ENCODE measurements at regions of chr1 and their contacts with region 1.

Region 1: GRCh38 chr1:58883037-58883887 is 99.4 kb upstream of the JUN start:
- DNase-seq: peak; percentile 83 to 87
- ATAC-seq: peak; percentile 64 to 84 (median 69)
- H3K4me3 ChIP-seq: no peak overlapping the region
- H3K27ac ChIP-seq: peak overlapping the region; percentile 88
- H3K4me1 ChIP-seq: peaks cover 64% of the 10 kb centered on the region
- H3K27me3 ChIP-seq: no peaks in the 10 kb centered on the region
- CTCF ChIP-seq: no peak

Region 2: GRCh38 chr1:58764294-58764978 is 118.8 kb before region 1 on chr1:
- intact Hi-C with region 1: no loop called
- DNase-seq: no peak
- ATAC-seq: no peak
- H3K4me3 ChIP-seq: no peak overlapping the region
- H3K27ac ChIP-seq: no peak overlapping the region
- H3K4me1 ChIP-seq: peaks cover 10% of the 10 kb centered on the region
- H3K27me3 ChIP-seq: no peaks in the 10 kb centered on the region
- CTCF ChIP-seq: no peak

Region 3: DNA sequence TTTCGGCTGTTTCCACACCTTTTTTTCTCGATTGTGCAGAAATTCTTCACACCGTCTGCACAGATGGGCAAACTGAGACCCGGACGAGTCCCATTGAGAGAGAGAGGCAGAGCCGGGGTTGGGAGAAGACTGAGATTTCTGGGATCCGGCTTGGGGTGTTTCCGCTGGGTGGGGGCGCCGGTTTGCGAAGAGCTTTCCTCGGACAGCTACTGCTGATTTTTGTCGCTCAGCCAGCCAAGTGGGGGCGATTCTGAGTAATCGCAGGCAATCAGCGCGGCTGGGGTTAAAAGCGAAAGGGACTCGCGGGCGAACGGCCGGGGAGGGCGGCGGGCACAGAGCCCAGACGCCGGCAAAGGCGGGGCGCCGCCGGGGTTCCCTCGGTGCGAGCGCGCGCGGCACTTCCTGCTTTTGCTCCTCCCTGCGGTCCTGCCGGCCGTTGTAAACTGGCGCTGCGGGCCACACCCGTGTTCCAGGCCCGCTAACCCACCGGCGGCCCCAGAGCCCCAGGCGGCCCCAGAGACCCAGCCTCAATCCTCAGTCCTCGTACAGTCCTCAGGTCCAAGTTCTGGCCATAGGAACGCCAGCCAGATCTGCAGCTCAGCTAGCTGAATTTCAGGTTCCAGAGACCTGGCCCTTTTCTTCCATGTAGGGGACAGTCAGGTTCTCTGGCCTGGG is 67.1 kb before region 1 on chr1:
- intact Hi-C with region 1: loop called in 1 of 2 experiments (anchors 5 kb)
- DNase-seq: peak; percentile 93 to 95
- ATAC-seq: peak; percentile 89 to 94 (median 92)
- H3K4me3 ChIP-seq: peak overlapping the region; percentile 65
- H3K27ac ChIP-seq: peak overlapping the region; percentile 97
- H3K4me1 ChIP-seq: no peaks in the 10 kb centered on the region
- H3K27me3 ChIP-seq: no peaks in the 10 kb centered on the region
- CTCF ChIP-seq: no peak